ENCODE measurements at regions of chr2 and their contacts with region 1.

Region 1: GRCh38 chr2:148509288-148509902 is 135.2 kb upstream of the EPC2 start:
- DNase-seq: peak; percentile 80
- H3K4me3 Mint-ChIP-seq: peak overlapping the region; percentile 23
- H3K27ac Mint-ChIP-seq: peak overlapping the region; percentile 35
- H3K4me1 Mint-ChIP-seq: peaks cover 22% of the 10 kb centered on the region
- H3K27me3 Mint-ChIP-seq: peaks cover 2% of the 10 kb centered on the region

Region 2: GRCh38 chr2:147937744-147938349 is 571.5 kb before region 1 on chr2:
- intact Hi-C with region 1: loop called (anchors 1 kb)
- DNase-seq: no peak
- H3K4me3 Mint-ChIP-seq: no peak overlapping the region
- H3K27ac Mint-ChIP-seq: no peak overlapping the region
- H3K4me1 Mint-ChIP-seq: no peaks in the 10 kb centered on the region
- H3K27me3 Mint-ChIP-seq: no peaks in the 10 kb centered on the region

Region 3: GRCh38 chr2:147989809-147990403 is 519.5 kb before region 1 on chr2:
- intact Hi-C with region 1: loop called (anchors 1 kb)
- DNase-seq: no peak
- H3K4me3 Mint-ChIP-seq: no peak overlapping the region
- H3K27ac Mint-ChIP-seq: no peak overlapping the region
- H3K4me1 Mint-ChIP-seq: peaks cover 8% of the 10 kb centered on the region
- H3K27me3 Mint-ChIP-seq: no peaks in the 10 kb centered on the region

Region 4: DNA sequence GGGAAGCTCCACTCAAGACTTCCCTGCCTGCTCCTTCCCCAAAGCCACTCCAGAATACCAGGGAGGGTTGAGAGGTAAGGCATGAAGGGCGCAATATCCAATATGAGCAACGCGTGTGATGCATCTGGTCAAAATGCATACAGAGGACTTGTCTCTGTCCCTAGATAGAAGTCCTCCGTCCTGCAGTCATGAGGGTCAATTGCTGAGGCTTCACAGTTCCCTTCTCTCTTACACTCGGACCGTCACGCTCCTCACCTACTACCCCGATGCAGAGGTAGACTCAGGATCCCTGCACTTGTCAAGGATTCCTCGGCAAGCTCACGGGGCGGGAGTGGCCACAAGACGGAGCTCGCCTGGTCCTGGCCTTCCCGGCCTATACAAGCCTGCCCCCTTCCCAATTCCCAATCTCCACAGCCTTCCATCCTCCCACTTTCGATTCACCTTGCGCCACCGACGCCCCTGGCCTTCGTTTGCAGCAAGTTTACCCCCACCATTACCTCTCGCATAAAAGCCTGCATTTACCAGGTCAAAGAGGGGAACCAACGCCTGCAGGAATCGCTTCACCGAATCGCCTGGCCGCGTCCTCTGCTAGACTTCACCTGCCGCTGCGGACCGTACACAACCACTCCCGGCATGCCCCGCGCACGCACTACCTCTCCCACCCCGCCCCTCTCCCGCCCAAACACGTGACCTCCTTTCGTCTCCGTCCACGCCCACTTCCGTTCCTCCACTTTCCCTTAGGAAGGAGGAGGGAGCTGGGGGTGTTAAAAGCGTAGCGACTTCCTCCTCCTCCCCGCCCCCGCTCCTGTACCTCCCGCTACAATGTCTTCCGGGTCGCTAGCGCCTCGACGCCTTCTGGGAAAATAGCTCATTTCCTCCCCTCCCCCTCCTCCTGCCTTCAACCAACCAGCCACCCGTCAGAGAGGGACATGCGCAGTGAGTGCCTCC is 489.0 kb before region 1 on chr2 and contains the start of gene ORC4:
- intact Hi-C with region 1: loop called (anchors 5 kb)
- DNase-seq: peak; percentile 94
- H3K4me3 Mint-ChIP-seq: peak within 1 kb of the TSS; percentile 100
- H3K27ac Mint-ChIP-seq: peak within 1 kb of the TSS; percentile 93
- H3K4me1 Mint-ChIP-seq: peaks cover 44% of the 10 kb centered on the region
- H3K27me3 Mint-ChIP-seq: no peaks in the 10 kb centered on the region
- total RNA-seq, gene ORC4: 25.4 and 31.2 TPM in 2 replicates

Region 5: GRCh38 chr2:148201075-148202004 is 308.1 kb before region 1 on chr2:
- intact Hi-C with region 1: loop called (anchors 10 kb)
- DNase-seq: peak; percentile 22
- H3K4me3 Mint-ChIP-seq: no peak overlapping the region
- H3K27ac Mint-ChIP-seq: no peak overlapping the region
- H3K4me1 Mint-ChIP-seq: no peaks in the 10 kb centered on the region
- H3K27me3 Mint-ChIP-seq: no peaks in the 10 kb centered on the region

Region 6: GRCh38 chr2:148540022-148540421 is 30.6 kb after region 1 on chr2:
- intact Hi-C with region 1: loop called (anchors 2 kb)
- DNase-seq: no peak
- H3K4me3 Mint-ChIP-seq: peak overlapping the region; percentile 13
- H3K27ac Mint-ChIP-seq: peak overlapping the region; percentile 53
- H3K4me1 Mint-ChIP-seq: peaks cover 29% of the 10 kb centered on the region
- H3K27me3 Mint-ChIP-seq: no peaks in the 10 kb centered on the region